ENCODE measurements at regions of chr5 and their contacts with region 1.

Region 1: GRCh38 chr5:149567226-149567625 is 14.1 kb upstream of the ARHGEF37 start:
- DNase-seq: no peak
- H3K4me3 Mint-ChIP-seq: no peak overlapping the region
- H3K27ac Mint-ChIP-seq: no peak overlapping the region
- H3K4me1 Mint-ChIP-seq: peaks cover 13% of the 10 kb centered on the region
- H3K27me3 Mint-ChIP-seq: no peaks in the 10 kb centered on the region

Region 2: GRCh38 chr5:149381987-149382340 is 185.3 kb before region 1 on chr5:
- CTCF ChIA-PET with region 1: interaction called, 65 read pairs
- POLR2A ChIA-PET with region 1: no interaction called
- intact Hi-C with region 1: loop called (anchors 1 kb)
- DNase-seq: peak; percentile 82
- H3K4me3 Mint-ChIP-seq: no peak overlapping the region
- H3K27ac Mint-ChIP-seq: no peak overlapping the region
- H3K4me1 Mint-ChIP-seq: no peaks in the 10 kb centered on the region
- H3K27me3 Mint-ChIP-seq: peaks cover 1% of the 10 kb centered on the region

Region 3: DNA sequence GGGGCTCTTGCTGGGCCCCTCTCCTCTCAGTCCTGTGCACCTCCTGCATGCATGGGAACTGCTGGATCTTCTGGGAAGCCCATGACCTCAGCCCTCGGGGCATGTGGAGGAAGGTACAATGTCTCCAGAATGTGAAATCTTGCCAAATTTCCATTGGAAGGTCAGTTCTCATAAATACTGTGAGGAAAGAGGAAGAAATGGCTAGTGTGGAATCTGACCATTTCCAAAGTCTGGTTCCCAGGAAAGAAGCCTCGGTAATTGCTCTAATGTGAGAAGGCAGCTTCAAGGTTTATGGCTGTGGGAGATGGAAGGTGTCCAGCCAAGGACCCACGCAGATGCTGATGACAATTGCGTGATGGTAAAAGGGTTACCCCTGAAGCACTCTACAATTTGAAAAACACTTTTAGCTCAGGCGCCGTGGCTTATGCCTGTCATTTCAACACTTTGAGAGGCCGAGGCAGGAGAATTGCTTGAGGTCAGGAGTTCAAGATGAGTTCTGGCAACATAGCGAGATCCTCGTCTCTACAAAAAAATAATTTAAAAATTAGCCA is 180.1 kb before region 1 on chr5:
- CTCF ChIA-PET with region 1: interaction called, 65 read pairs
- POLR2A ChIA-PET with region 1: no interaction called
- intact Hi-C with region 1: loop called (anchors 1 kb)
- DNase-seq: no peak
- H3K4me3 Mint-ChIP-seq: no peak overlapping the region
- H3K27ac Mint-ChIP-seq: no peak overlapping the region
- H3K4me1 Mint-ChIP-seq: no peaks in the 10 kb centered on the region
- H3K27me3 Mint-ChIP-seq: no peaks in the 10 kb centered on the region

Region 4: DNA sequence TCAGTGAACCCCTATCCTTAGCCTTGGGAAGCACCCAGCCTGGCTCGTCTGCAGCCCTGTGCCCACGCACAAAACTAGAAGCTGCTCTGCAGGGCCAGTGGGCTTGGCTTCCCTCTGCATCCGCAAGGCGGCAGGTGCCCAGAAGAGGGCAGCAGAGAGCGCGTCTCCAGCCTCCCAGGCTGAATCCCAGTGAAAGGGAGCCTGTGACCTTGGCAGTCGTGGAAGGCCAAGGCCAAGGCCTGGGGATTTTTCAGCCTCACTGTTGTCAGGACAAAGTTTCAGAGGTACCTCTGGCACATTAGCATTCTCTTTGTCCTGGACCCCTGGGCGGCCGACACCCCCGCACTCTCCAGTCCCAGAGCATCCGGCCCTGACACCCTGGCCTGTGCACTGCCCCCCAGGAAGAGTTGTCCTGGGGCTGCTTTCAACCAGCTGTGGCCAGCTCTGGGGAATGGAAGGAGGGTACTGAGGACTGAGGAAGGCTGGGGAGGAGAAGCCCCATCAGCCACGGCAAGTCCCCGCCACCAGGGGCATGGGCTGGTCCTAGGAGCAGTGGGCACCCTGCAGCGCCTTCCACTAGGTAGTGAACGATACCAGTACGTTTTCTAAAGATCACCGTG is 124.6 kb before region 1 on chr5:
- CTCF ChIA-PET with region 1: interaction called, 38 read pairs
- POLR2A ChIA-PET with region 1: no interaction called
- intact Hi-C with region 1: loop called (anchors 1 kb)
- DNase-seq: peak; percentile 85
- H3K4me3 Mint-ChIP-seq: no peak overlapping the region
- H3K27ac Mint-ChIP-seq: no peak overlapping the region
- H3K4me1 Mint-ChIP-seq: peaks cover 23% of the 10 kb centered on the region
- H3K27me3 Mint-ChIP-seq: no peaks in the 10 kb centered on the region

Region 5: GRCh38 chr5:149749481-149750365 is 182.5 kb after region 1 on chr5:
- CTCF ChIA-PET with region 1: no interaction called
- POLR2A ChIA-PET with region 1: no interaction called
- intact Hi-C with region 1: no loop called
- DNase-seq: no peak
- H3K4me3 Mint-ChIP-seq: no peak overlapping the region
- H3K27ac Mint-ChIP-seq: no peak overlapping the region
- H3K4me1 Mint-ChIP-seq: peaks cover 13% of the 10 kb centered on the region
- H3K27me3 Mint-ChIP-seq: no peaks in the 10 kb centered on the region

Region 6: DNA sequence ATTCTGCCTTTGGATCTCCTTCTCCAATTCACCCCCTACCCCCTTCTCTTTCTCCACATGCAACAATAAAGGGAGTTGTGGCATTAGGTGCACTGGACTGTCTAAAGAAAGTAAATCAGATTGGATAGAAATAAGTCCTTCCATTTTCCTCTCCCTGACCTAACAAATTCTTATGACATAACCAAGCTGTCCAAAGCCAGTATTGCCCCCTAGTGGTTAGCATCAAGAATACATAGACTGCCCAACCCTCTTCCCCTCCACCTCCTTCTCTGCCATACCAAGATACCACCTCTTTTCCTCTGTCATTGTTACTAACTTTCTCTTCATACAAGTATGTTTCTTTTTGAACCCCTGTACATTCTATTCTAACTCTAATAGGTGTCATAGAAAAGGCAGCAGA is 208.6 kb after region 1 on chr5:
- CTCF ChIA-PET with region 1: no interaction called
- POLR2A ChIA-PET with region 1: no interaction called
- intact Hi-C with region 1: no loop called
- DNase-seq: no peak
- H3K4me3 Mint-ChIP-seq: no peak overlapping the region
- H3K27ac Mint-ChIP-seq: no peak overlapping the region
- H3K4me1 Mint-ChIP-seq: peaks cover 15% of the 10 kb centered on the region
- H3K27me3 Mint-ChIP-seq: no peaks in the 10 kb centered on the region

Region 7: GRCh38 chr5:150398722-150399523 is 831.7 kb after region 1 on chr5:
- CTCF ChIA-PET with region 1: no interaction called
- POLR2A ChIA-PET with region 1: no interaction called
- intact Hi-C with region 1: no loop called
- DNase-seq: no peak
- H3K4me3 Mint-ChIP-seq: no peak overlapping the region
- H3K27ac Mint-ChIP-seq: no peak overlapping the region
- H3K4me1 Mint-ChIP-seq: no peaks in the 10 kb centered on the region
- H3K27me3 Mint-ChIP-seq: no peaks in the 10 kb centered on the region

Measured in activated CD4-positive, alpha-beta memory T cell treated with anti-CD3 and anti-CD28 coated beads for 36 hours (primary cell).